ENCODE measurements at regions of chr11 and their contacts with region 1.

Region 1: GRCh38 chr11:67239783-67240575 is 26.3 kb upstream of the GRK2 start:
- DNase-seq: peak; percentile 99
- H3K4me3 ChIP-seq: peak overlapping the region; percentile 82
- H3K27ac ChIP-seq: peak overlapping the region; percentile 80
- H3K4me1 ChIP-seq: peaks cover 54% of the 10 kb centered on the region
- H3K27me3 ChIP-seq: no peaks in the 10 kb centered on the region
- CTCF ChIP-seq: no peak

Region 2: DNA sequence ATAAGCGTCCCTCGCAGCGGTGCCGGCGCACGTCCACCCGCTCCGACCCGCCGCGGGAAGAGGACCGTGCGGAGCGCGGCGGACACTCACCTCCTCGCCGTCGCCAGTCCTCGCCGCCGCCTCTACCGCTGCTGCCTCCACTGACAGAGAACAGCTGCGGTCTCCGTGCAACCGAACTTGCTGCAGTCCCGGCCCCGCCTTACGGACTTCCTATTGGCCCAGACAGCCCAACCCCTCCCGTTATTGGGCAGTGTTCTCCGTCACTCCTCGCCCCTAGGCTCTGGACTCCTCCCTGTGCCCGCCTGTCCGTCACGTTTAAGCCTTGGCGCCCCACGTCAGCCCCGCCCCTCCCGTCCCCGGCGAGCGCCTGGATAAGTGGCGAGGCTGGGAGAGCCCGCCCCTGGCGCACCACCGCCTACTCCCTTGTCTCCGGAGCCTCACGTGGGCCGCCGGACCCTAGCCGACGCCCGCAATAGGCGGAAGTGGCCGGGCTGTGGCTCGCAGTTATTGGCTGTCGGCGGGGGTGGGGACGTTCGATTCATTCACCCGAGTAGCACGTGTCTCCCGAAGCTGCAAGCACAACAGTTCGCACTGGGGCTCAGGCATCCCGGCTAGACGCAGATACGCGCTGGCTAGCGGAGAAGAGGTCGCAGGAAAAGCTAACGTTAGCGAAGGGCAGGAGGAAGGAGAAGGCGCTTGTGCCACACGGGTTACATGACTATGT is 281.6 kb before region 1 on chr11 and contains the start of gene PC:
- CTCF ChIA-PET with region 1: no interaction called
- POLR2A ChIA-PET with region 1: no interaction called
- intact Hi-C with region 1: loop called (anchors 10 kb)
- DNase-seq: peak; percentile 99 to 100
- H3K4me3 ChIP-seq: peak within 1 kb of the TSS; percentile 63
- H3K27ac ChIP-seq: no peak within 1 kb of the TSS
- H3K4me1 ChIP-seq: peaks cover 22% of the 10 kb centered on the region
- H3K27me3 ChIP-seq: no peaks in the 10 kb centered on the region
- CTCF ChIP-seq: no peak
- total RNA-seq, gene PC: 34.9 and 38.9 TPM in 2 replicates

Region 3: GRCh38 chr11:67118801-67119584 is 121.0 kb before region 1 on chr11 and contains the start of gene KDM2A:
- CTCF ChIA-PET with region 1: no interaction called
- POLR2A ChIA-PET with region 1: interaction called, 13 read pairs
- intact Hi-C with region 1: loop called (anchors 5 kb)
- DNase-seq: peak; percentile 91 to 98
- H3K4me3 ChIP-seq: peak within 1 kb of the TSS; percentile 83
- H3K27ac ChIP-seq: peak within 1 kb of the TSS; percentile 82
- H3K4me1 ChIP-seq: peaks cover 13% of the 10 kb centered on the region
- H3K27me3 ChIP-seq: no peaks in the 10 kb centered on the region
- CTCF ChIP-seq: no peak
- total RNA-seq, gene KDM2A: 117 and 120 TPM in 2 replicates

Region 4: DNA sequence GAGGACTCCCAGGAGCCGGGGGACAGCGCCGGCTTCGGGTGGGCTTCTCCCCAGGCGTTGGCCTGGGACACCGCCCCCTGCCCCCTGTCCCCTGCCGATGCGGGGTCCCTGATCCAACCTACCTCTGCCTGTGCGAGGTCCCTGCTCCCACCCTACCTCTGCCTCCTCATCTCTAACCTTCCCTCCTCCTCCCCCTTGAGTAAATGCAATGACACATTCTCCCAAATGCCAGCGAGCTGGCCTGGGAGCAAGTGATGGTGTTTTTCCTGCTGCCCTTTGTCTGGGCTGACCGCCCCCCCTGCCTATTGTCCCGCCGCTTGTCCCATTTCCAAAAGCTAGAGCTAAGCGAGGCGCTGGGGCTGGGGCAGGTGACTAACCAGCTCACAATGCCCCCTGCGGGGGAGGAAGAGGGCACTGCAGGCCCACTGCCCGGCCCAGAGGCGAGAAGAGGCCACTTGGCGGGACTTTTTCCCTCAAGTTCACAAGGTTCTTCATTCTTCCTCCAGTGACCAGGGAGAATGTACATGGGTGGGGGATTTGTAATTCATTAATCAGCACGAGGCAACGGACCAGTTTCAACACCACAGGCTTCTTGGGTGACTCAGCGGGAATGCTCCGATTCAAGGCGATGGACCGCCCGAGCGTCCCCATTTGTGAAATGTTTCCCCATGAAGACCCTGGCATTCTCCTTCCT is 134.1 kb after region 1 on chr11:
- CTCF ChIA-PET with region 1: no interaction called
- POLR2A ChIA-PET with region 1: no interaction called
- intact Hi-C with region 1: loop called (anchors 10 kb)
- DNase-seq: peak; percentile 98 to 99
- H3K4me3 ChIP-seq: peak overlapping the region; percentile 87
- H3K27ac ChIP-seq: peak overlapping the region; percentile 99
- H3K4me1 ChIP-seq: peaks cover 59% of the 10 kb centered on the region
- H3K27me3 ChIP-seq: no peaks in the 10 kb centered on the region
- CTCF ChIP-seq: peak; percentile 64

Region 5: GRCh38 chr11:67583247-67584204 is 343.5 kb after region 1 on chr11 and contains the start of gene GSTP1:
- CTCF ChIA-PET with region 1: no interaction called
- POLR2A ChIA-PET with region 1: no interaction called
- intact Hi-C with region 1: loop called (anchors 5 kb)
- DNase-seq: peak; percentile 75 to 94
- H3K4me3 ChIP-seq: peak within 1 kb of the TSS; percentile 82
- H3K27ac ChIP-seq: peak within 1 kb of the TSS; percentile 69
- H3K4me1 ChIP-seq: peaks cover 52% of the 10 kb centered on the region
- H3K27me3 ChIP-seq: no peaks in the 10 kb centered on the region
- CTCF ChIP-seq: peak; percentile 78
- total RNA-seq, gene GSTP1: 2,063 and 2,645 TPM in 2 replicates

Measured in PC-9 (cell line).